ENCODE measurements at regions of chr22 and their contacts with region 1.

Region 1: DNA sequence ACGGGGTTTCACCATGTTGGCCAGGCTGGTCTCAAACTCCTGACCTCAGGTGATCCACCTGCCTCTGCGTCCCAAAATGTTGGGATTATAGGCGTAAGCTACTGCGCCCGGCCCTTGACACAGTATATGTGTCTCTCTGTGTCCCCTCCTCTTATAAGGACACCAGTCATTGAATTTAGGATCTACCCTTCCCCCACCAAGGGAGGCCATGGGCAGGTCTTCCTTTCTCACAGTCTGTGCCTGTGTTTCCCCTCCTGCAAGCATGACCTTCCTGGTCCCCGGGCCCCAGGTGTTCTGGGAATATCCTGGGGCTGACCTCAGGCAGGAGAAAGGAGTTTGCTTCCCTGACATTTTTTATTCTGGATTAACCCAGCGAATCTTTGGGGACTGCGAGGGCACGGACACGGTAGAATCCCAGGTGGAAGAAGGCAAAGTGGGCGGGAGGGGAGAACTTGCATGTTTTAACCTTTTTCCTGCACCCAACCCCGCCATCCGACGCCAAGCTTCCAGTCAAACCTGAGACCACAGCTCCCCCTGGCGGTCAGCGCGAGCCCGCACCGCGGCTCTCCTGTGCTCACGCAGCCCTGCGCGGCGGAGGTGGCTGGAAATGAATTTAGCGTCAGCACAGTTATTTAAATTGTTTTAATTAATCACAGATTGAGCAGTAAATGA is 42.1 kb upstream of the ISX start:
- DNase-seq: peak; percentile 28
- ATAC-seq: peak; percentile 96
- H3K4me3 ChIP-seq: no peak overlapping the region
- H3K27ac ChIP-seq: no peak overlapping the region
- H3K4me1 ChIP-seq: no peaks in the 10 kb centered on the region
- H3K27me3 ChIP-seq: no peaks in the 10 kb centered on the region
- CTCF ChIP-seq: peak; percentile 30 to 98 (median 97); a peak in 5 of 6 replicates
- POLR2A ChIP-seq: no peak
- RAD21 ChIP-seq: peak; percentile 73

Region 2: DNA sequence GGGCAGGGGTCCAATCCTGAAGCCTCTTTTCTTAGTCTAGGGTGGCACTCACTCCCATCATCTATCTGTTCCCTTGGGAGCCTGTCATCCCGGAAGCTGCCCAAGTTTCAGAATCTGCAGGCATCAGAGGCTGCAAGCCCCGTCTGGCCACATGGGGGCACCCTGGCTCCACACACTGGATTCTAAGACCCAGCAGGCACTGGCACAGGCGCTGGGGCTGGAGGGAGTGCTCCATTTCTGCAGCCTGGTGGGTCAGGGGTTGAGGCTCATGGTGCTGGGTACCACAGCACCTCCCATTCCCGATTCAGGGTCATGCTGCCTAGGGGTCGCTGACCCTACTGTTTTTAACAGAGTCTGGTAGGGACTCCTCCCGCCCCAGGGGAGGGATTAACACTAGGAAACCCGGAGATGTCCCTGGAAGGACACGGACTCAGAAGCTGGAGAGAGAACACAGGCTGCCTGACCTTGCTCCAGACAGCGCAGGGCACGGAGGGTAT is 1721.7 kb before region 1 on chr22:
- CTCF ChIA-PET with region 1: no interaction called
- POLR2A ChIA-PET with region 1: no interaction called
- RAD21 ChIA-PET with region 1: no interaction called
- intact Hi-C with region 1: loop called (anchors 5 kb)
- DNase-seq: peak; percentile 0
- ATAC-seq: peak; percentile 63
- H3K4me3 ChIP-seq: no peak overlapping the region
- H3K27ac ChIP-seq: no peak overlapping the region
- H3K4me1 ChIP-seq: no peaks in the 10 kb centered on the region
- H3K27me3 ChIP-seq: no peaks in the 10 kb centered on the region
- CTCF ChIP-seq: peak in 2 of 3 experiments; percentile 59; a peak in 4 of 6 replicates
- POLR2A ChIP-seq: no peak
- RAD21 ChIP-seq: peak; percentile 19; the same call in 1 of the 2 replicates

Region 3: GRCh38 chr22:33920927-33921524 is 1102.8 kb before region 1 on chr22:
- CTCF ChIA-PET with region 1: no interaction called
- POLR2A ChIA-PET with region 1: no interaction called
- RAD21 ChIA-PET with region 1: no interaction called
- intact Hi-C with region 1: loop called (anchors 5 kb)
- DNase-seq: peak; percentile 57
- ATAC-seq: peak; percentile 92
- H3K4me3 ChIP-seq: peak overlapping the region; percentile 26 to 42; a peak in 3 of 4 replicates
- H3K27ac ChIP-seq: no peak overlapping the region
- H3K4me1 ChIP-seq: peaks cover 0 to 7% of the 10 kb centered on the region in 2 experiments; a peak in 1 of 4 replicates
- H3K27me3 ChIP-seq: 0 out of 2 replicates have a peak, but pooled peaks cover 6% of the 10 kb centered on the region
- CTCF ChIP-seq: no peak
- POLR2A ChIP-seq: no peak
- RAD21 ChIP-seq: no peak

Region 4: DNA sequence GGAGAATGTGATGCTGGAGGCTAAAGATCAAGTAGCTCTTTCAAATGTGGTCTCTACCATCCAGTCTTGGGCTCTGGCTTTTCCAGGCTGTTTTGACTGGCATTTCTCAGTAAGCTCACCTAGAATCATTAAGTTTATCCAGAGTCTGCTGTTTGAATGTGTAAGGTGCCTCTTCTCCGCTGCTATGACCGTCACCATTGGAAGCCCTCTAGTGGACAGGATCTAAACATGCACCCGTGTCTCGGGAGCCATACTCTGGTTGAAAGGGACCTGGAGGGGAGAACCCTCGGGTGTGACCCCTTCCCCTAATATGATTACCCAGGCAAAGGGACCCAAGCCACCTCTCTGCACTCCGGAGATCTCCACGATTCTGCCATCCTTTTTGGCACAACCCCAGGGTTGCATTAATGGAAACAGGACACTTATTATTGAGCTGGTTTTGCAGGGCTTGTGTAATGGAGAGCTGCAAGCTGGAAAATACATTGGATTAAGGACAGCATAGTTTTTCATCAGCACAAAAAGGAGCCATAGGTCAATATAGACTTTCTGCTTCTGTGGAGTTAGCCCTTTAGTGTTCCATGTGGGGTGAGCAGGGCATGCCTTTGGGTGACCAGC is 912.5 kb before region 1 on chr22:
- CTCF ChIA-PET with region 1: no interaction called
- POLR2A ChIA-PET with region 1: no interaction called
- RAD21 ChIA-PET with region 1: no interaction called
- intact Hi-C with region 1: loop called (anchors 10 kb)
- DNase-seq: no peak
- ATAC-seq: no peak
- H3K4me3 ChIP-seq: no peak overlapping the region
- H3K27ac ChIP-seq: no peak overlapping the region
- H3K4me1 ChIP-seq: no peaks in the 10 kb centered on the region
- H3K27me3 ChIP-seq: no peaks in the 10 kb centered on the region
- CTCF ChIP-seq: peak in 2 of 3 experiments; percentile 51 to 57; a peak in 4 of 6 replicates
- POLR2A ChIP-seq: no peak
- RAD21 ChIP-seq: no peak

Region 5: GRCh38 chr22:34414484-34415440 is 609.1 kb before region 1 on chr22:
- CTCF ChIA-PET with region 1: no interaction called
- POLR2A ChIA-PET with region 1: no interaction called
- RAD21 ChIA-PET with region 1: no interaction called
- intact Hi-C with region 1: loop called (anchors 10 kb)
- DNase-seq: peak; percentile 4
- ATAC-seq: peak; percentile 36; the same call in 1 of the 2 replicates
- H3K4me3 ChIP-seq: no peak overlapping the region
- H3K27ac ChIP-seq: no peak overlapping the region
- H3K4me1 ChIP-seq: no peaks in the 10 kb centered on the region
- H3K27me3 ChIP-seq: no peaks in the 10 kb centered on the region
- CTCF ChIP-seq: peak in 2 of 3 experiments; percentile 36 to 37; a peak in 3 of 6 replicates
- POLR2A ChIP-seq: no peak
- RAD21 ChIP-seq: peak; percentile 24; the same call in 1 of the 2 replicates

Region 6: GRCh38 chr22:34960005-34960404 is 63.8 kb before region 1 on chr22:
- CTCF ChIA-PET with region 1: no interaction called
- POLR2A ChIA-PET with region 1: no interaction called
- RAD21 ChIA-PET with region 1: no interaction called
- intact Hi-C with region 1: no loop called
- DNase-seq: no peak
- ATAC-seq: no peak
- H3K4me3 ChIP-seq: no peak overlapping the region
- H3K27ac ChIP-seq: no peak overlapping the region
- H3K4me1 ChIP-seq: no peaks in the 10 kb centered on the region
- H3K27me3 ChIP-seq: peaks cover 9% of the 10 kb centered on the region
- CTCF ChIP-seq: no peak
- POLR2A ChIP-seq: no peak
- RAD21 ChIP-seq: no peak

Region 7: DNA sequence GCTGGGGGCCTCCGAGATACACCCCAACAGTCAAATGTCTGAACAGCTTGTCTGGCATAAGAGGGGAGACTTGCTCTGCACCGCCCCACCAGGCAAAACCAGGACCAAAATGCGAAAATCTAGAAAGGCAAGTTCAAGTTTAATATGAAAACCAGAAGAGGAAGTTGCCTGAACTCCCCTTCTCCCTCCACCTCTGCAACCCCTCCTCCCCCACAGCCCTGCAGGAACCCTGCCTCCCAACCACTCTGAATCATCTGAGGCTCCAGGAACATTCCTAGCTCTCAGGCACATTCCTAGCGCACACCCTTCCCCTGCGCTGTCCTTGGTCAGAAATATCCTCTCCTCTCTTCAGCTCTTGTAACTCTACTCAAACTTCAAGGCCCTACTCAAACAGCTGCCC is 78.8 kb after region 1 on chr22:
- CTCF ChIA-PET with region 1: no interaction called
- POLR2A ChIA-PET with region 1: no interaction called
- RAD21 ChIA-PET with region 1: no interaction called
- intact Hi-C with region 1: no loop called
- DNase-seq: no peak
- ATAC-seq: peak; percentile 53; the same call in 1 of the 2 replicates
- H3K4me3 ChIP-seq: no peak overlapping the region
- H3K27ac ChIP-seq: no peak overlapping the region
- H3K4me1 ChIP-seq: peaks cover 2 to 5% of the 10 kb centered on the region in 2 experiments; a peak in 3 of 4 replicates
- H3K27me3 ChIP-seq: no peaks in the 10 kb centered on the region
- CTCF ChIP-seq: no peak
- POLR2A ChIP-seq: no peak
- RAD21 ChIP-seq: no peak

Region 8: DNA sequence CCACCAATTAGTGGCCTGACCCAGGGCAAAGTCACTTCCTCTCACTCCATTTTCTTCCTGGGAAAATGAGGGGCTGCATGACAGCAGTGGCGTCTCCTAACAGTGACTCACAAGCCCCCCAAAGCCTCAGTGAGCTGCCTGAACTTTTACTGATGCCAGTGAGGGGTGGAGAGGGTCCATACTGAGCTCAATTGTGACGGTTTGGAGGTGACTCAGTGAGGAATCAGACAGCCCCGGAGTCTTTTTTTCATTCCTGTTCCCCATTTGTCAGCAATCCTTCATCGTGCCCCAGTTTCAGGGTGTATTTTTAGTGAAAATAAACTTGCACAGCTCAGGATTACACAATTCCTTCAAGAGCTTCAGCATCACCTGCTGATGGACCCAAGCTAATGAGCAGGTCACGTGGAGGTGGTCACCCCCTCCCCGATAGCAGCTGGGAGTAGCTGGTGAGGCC is 486.7 kb after region 1 on chr22:
- CTCF ChIA-PET with region 1: no interaction called
- POLR2A ChIA-PET with region 1: no interaction called
- RAD21 ChIA-PET with region 1: no interaction called
- intact Hi-C with region 1: no loop called
- DNase-seq: no peak
- ATAC-seq: no peak
- H3K4me3 ChIP-seq: no peak overlapping the region
- H3K27ac ChIP-seq: no peak overlapping the region
- H3K4me1 ChIP-seq: no peaks in the 10 kb centered on the region
- H3K27me3 ChIP-seq: peaks cover 28% of the 10 kb centered on the region
- CTCF ChIP-seq: no peak
- POLR2A ChIP-seq: no peak
- RAD21 ChIP-seq: no peak